PC-9 (cell line): ENCODE measurements at regions of chr1 and their contacts with region 1.

Region 1: GRCh38 chr1:183263886-183264593 is 78.0 kb downstream of the LAMC2 start:
- DNase-seq: no peak
- H3K4me3 ChIP-seq: no peak overlapping the region
- H3K27ac ChIP-seq: no peak overlapping the region
- H3K4me1 ChIP-seq: 0 out of 2 replicates have a peak, but pooled peaks cover 8% of the 10 kb centered on the region
- H3K27me3 ChIP-seq: no peaks in the 10 kb centered on the region
- CTCF ChIP-seq: no peak

Region 2: GRCh38 chr1:183444243-183444642 is 180.2 kb after region 1 on chr1:
- CTCF ChIA-PET with region 1: no interaction called
- POLR2A ChIA-PET with region 1: no interaction called
- intact Hi-C with region 1: no loop called
- DNase-seq: peak in 1 of 2 experiments; percentile 82
- H3K4me3 ChIP-seq: no peak overlapping the region
- H3K27ac ChIP-seq: peak overlapping the region; percentile 61
- H3K4me1 ChIP-seq: peaks cover 33% of the 10 kb centered on the region
- H3K27me3 ChIP-seq: no peaks in the 10 kb centered on the region
- CTCF ChIP-seq: no peak

Region 3: DNA sequence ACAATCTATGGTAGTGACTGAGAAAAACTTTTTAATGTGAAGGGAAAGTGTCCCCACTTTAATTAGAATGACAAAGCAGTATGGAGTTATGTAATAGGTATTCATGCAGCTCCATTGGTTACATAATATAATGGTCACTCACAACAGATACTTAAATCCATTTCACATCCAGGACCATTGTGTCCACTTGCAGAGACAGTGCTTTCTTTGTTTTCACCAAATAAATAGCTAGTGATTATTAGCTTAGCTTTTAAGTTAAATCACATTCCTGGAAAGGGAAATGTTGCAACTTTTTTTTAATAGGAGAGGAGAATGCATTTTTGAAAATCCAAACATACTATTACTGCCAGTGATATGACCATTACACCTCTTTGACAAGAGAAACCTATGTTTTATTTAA is 563.8 kb after region 1 on chr1:
- CTCF ChIA-PET with region 1: no interaction called
- POLR2A ChIA-PET with region 1: no interaction called
- intact Hi-C with region 1: loop called (anchors 5 kb)
- DNase-seq: peak in 1 of 2 experiments; percentile 37
- H3K4me3 ChIP-seq: no peak overlapping the region
- H3K27ac ChIP-seq: no peak overlapping the region
- H3K4me1 ChIP-seq: no peaks in the 10 kb centered on the region; the same call in 1 of the 2 replicates
- H3K27me3 ChIP-seq: no peaks in the 10 kb centered on the region
- CTCF ChIP-seq: no peak